WTC11 (cell line): ENCODE measurements at regions of chr11 and their contacts with region 1.

Region 1: GRCh38 chr11:36746886-36747710 is 149.1 kb upstream of the RAG2 start:
- DNase-seq: peak; percentile 74
- ATAC-seq: peak; percentile 95
- H3K4me3 Mint-ChIP-seq: no peak overlapping the region
- H3K27ac Mint-ChIP-seq: no peak overlapping the region
- H3K4me1 Mint-ChIP-seq: no peaks in the 10 kb centered on the region
- H3K27me3 Mint-ChIP-seq: peaks cover 5% of the 10 kb centered on the region; the same call in 1 of the 2 replicates
- CTCF ChIP-seq: peak; percentile 65

Region 2: GRCh38 chr11:36564376-36565030 is 182.6 kb before region 1 on chr11:
- CTCF ChIA-PET with region 1: interaction called, 40 read pairs
- POLR2A ChIA-PET with region 1: no interaction called
- DNase-seq: no peak
- ATAC-seq: peak; percentile 56
- H3K4me3 Mint-ChIP-seq: peak overlapping the region; percentile 20; the same call in 1 of the 2 replicates
- H3K27ac Mint-ChIP-seq: no peak overlapping the region
- H3K4me1 Mint-ChIP-seq: no peaks in the 10 kb centered on the region
- H3K27me3 Mint-ChIP-seq: peaks cover 13% of the 10 kb centered on the region
- CTCF ChIP-seq: no peak

Region 3: GRCh38 chr11:36702330-36703055 is 44.6 kb before region 1 on chr11:
- CTCF ChIA-PET with region 1: interaction called, 45 read pairs
- POLR2A ChIA-PET with region 1: no interaction called
- DNase-seq: no peak
- ATAC-seq: peak; percentile 87
- H3K4me3 Mint-ChIP-seq: no peak overlapping the region
- H3K27ac Mint-ChIP-seq: no peak overlapping the region
- H3K4me1 Mint-ChIP-seq: peaks cover 23% of the 10 kb centered on the region
- H3K27me3 Mint-ChIP-seq: peaks cover 3% of the 10 kb centered on the region
- CTCF ChIP-seq: peak; percentile 38; the same call in 1 of the 2 replicates